ENCODE measurements at regions of chr17 and their contacts with region 1.

Region 1: GRCh38 chr17:17141860-17142552 is 64.1 kb downstream of the PLD6 start:
- DNase-seq: peak; percentile 18
- H3K4me3 ChIP-seq: no peak overlapping the region
- H3K27ac ChIP-seq: no peak overlapping the region
- H3K4me1 ChIP-seq: peaks cover 35% of the 10 kb centered on the region
- H3K27me3 ChIP-seq: no peaks in the 10 kb centered on the region
- CTCF ChIP-seq: peak; percentile 98

Region 2: GRCh38 chr17:15954222-15954621 is 1187.8 kb before region 1 on chr17:
- CTCF ChIA-PET with region 1: no interaction called
- dilution Hi-C with region 1: no loop called
- in situ Hi-C with region 1: no loop called
- intact Hi-C with region 1: no loop called
- DNase-seq: peak; percentile 92
- H3K4me3 ChIP-seq: no peak overlapping the region
- H3K27ac ChIP-seq: peak overlapping the region; percentile 18
- H3K4me1 ChIP-seq: peaks cover 41% of the 10 kb centered on the region
- H3K27me3 ChIP-seq: no peaks in the 10 kb centered on the region
- CTCF ChIP-seq: peak in 1 of 2 donors; percentile 21

Region 3: DNA sequence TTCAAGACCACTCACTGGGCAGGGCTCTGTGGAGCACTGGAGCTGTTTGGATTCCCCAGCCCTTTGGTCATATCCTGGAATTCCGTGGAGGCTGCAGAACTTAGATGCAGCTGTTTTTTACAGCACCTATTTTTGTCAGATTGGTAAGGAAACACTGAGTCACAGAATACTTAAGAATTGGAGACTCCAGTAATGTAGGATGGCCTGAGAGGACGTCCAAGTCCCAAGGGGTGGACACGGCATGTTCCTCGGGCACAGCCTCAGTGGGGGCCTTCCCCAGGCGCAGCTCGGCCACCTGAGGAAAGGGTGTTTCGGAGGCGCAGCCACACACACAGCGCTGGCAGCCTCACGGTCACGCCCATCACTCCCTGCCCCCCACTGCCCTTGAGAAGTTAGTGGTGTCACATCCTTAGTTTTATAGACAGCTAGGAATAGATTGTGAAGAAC is 49.4 kb after region 1 on chr17:
- CTCF ChIA-PET with region 1: no interaction called
- dilution Hi-C with region 1: no loop called
- in situ Hi-C with region 1: no loop called
- intact Hi-C with region 1: loop called (anchors 5 kb)
- DNase-seq: no peak
- H3K4me3 ChIP-seq: no peak overlapping the region
- H3K27ac ChIP-seq: no peak overlapping the region
- H3K4me1 ChIP-seq: peaks cover 22% of the 10 kb centered on the region
- H3K27me3 ChIP-seq: no peaks in the 10 kb centered on the region
- CTCF ChIP-seq: no peak

Region 4: GRCh38 chr17:17216776-17217175 is 74.8 kb after region 1 on chr17:
- CTCF ChIA-PET with region 1: interaction called, 5 read pairs
- dilution Hi-C with region 1: no loop called
- in situ Hi-C with region 1: no loop called
- intact Hi-C with region 1: loop called (anchors 5 kb)
- DNase-seq: no peak
- H3K4me3 ChIP-seq: no peak overlapping the region
- H3K27ac ChIP-seq: no peak overlapping the region
- H3K4me1 ChIP-seq: no peaks in the 10 kb centered on the region
- H3K27me3 ChIP-seq: no peaks in the 10 kb centered on the region
- CTCF ChIP-seq: peak; percentile 28 to 35

Region 5: DNA sequence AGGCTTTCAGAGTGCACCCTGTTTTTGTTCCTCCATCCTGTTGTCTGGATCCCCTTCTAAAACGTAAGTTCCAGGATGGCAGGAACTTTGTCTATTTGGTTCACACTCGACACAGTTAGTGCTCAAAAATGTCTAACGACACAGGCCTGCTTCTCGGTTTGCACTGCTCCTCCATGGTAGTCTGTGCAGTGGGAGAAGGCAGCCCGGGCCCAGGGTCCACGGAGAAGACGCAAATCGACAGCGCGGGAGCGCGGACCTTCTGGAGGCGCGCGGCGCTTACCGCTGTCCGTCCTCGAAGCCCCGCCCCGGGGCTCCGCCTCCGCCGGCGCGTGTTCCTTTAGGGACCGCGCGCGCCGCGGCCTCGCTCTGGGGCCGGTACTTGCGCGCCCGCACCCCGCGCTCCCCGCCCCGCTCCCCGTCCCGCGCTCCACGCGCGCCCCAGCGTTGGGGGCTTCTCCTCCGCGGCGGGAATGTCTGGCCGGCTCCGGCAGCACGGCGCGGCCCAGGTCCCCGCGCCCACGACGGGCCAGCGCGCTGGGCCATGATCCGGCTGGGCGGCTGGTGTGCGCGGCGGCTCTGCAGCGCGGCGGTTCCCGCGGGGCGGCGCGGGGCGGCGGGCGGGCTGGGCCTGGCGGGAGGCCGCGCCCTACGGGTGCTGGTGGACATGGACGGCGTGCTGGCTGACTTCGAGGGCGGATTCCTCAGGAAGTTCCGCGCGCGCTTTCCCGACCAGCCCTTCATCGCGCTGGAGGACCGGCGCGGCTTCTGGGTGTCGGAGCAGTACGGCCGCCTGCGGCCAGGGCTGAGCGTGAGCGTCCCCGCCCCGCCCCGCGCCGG is 161.2 kb after region 1 on chr17 and contains the start of gene NT5M:
- CTCF ChIA-PET with region 1: no interaction called
- dilution Hi-C with region 1: no loop called
- in situ Hi-C with region 1: loop called in 1 of 2 experiments (anchors 25 kb)
- intact Hi-C with region 1: no loop called
- DNase-seq: peak; percentile 59
- H3K4me3 ChIP-seq: peak within 1 kb of the TSS; percentile 53 to 61 (median 56)
- H3K27ac ChIP-seq: no peak within 1 kb of the TSS
- H3K4me1 ChIP-seq: peaks cover 12% of the 10 kb centered on the region
- H3K27me3 ChIP-seq: no peaks in the 10 kb centered on the region
- CTCF ChIP-seq: no peak
- total RNA-seq, gene NT5M: 3.2 to 3.8 TPM

Measured in mammary epithelial cell (primary cell).